ENCODE measurements at regions of chr16 and their contacts with region 1.

Region 1: DNA sequence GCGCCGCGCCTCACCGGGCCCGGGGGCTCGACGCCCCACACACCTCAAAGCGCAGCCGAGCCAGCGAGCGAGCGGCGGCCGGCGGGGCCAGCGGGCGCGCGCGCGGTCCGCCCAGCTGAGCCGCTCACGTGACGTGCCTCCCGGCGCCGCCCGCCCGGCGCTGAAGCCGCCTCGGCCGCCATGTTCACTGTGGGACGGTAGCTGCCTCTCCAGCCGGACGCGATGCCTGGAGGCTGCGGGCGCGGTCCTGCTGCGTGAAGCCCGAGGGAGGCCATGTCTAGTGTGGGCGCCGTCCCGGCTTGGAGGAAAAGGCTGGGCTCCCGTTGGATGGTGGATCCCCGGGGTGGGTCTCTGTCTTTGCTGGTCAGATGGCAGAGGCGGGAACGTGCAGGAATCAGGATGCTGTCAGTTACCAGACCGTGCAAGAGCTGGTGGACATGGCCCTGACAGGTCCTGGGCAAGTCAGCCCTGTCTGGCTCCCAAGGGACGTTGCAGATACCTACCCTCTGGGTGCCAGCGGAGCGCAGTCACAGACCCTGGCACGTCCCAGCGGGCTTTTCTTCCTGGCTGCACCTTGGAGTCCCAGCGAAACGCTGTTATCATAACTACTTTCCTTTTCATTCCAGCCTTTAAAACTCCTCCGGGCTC is at the start of gene USP31:
- DNase-seq: peak; percentile 95 to 98 (median 96)
- H3K4me3 ChIP-seq: peak within 1 kb of the TSS; percentile 20 to 89 (median 55)
- H3K27ac ChIP-seq: peak within 1 kb of the TSS in 3 of 5 donors; percentile 64 to 91 (median 67)
- H3K4me1 ChIP-seq: peaks cover 15 to 28% of the 10 kb centered on the region in 2 donors
- H3K27me3 ChIP-seq: no peaks in the 10 kb centered on the region
- CTCF ChIP-seq: no peak
- POLR2A ChIP-seq: peak in 1 of 2 donors; percentile 33
- total RNA-seq, gene USP31: 6.8 to 19.3 (median 9.4) TPM

Region 2: DNA sequence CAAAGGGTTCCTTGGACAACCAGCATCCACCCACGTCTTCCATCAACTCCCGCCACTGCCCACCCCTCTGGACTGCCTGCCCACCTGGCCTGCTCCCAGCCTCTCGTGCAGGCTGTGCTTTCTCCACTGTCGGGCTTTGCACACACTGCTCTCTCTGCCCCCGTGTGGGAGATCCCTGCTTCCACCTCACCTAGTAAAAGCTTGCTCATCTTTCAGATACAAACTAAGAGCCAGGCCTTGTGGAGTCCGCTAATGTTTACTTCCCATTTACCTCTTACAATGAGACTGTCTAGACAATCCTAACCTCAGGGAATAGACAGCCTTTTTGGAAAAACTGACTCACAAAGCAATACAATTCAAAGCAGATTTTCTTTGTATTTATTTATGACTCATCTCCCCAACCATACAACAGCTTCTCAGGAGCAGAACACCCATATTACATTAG is 67.8 kb before region 1 on chr16:
- intact Hi-C with region 1: loop called (anchors 5 to 10 kb)
- DNase-seq: no peak
- H3K4me3 ChIP-seq: no peak overlapping the region
- H3K27ac ChIP-seq: peak overlapping the region in 1 of 5 donors; percentile 30
- H3K4me1 ChIP-seq: peaks cover 3 to 13% of the 10 kb centered on the region in 2 donors
- H3K27me3 ChIP-seq: no peaks in the 10 kb centered on the region
- CTCF ChIP-seq: no peak
- POLR2A ChIP-seq: no peak